CD4-positive, alpha-beta memory T cell (primary cell): ENCODE measurements at regions of chr18 and their contacts with region 1.

Region 1: GRCh38 chr18:40676668-40677067 is 1278.4 kb upstream of the PIK3C3 start:
- DNase-seq: no peak
- H3K4me3 ChIP-seq: no peak overlapping the region
- H3K4me3 Mint-ChIP-seq: no peak overlapping the region
- H3K27ac ChIP-seq: no peak overlapping the region
- H3K27ac Mint-ChIP-seq: no peak overlapping the region
- H3K4me1 ChIP-seq: no peaks in the 10 kb centered on the region
- H3K4me1 Mint-ChIP-seq: no peaks in the 10 kb centered on the region
- H3K27me3 ChIP-seq: no peaks in the 10 kb centered on the region
- H3K27me3 Mint-ChIP-seq: no peaks in the 10 kb centered on the region

Region 2: DNA sequence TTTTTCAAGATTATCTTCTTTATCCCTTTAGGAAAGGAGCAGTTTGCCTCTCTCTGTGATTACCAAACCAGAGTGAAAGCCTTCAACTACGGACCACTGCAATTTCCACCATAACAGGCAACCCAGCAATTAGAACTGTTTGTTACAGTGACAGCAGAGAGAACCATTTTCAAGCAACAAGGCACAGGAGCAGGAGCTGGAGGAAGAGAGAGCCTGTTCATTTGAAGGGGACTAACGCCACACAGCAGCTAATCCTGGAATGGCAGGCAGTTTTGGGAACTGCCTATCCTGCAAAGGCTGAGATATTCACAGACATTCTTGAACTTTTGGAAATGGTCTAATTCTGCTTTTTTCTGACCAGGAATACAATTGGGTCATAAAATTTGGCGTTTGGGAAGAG is 263.5 kb before region 1 on chr18:
- CTCF ChIA-PET with region 1: no interaction called
- POLR2A ChIA-PET with region 1: no interaction called
- intact Hi-C with region 1: no loop called
- DNase-seq: no peak
- H3K4me3 ChIP-seq: no peak overlapping the region
- H3K4me3 Mint-ChIP-seq: no peak overlapping the region
- H3K27ac ChIP-seq: no peak overlapping the region
- H3K27ac Mint-ChIP-seq: no peak overlapping the region
- H3K4me1 ChIP-seq: no peaks in the 10 kb centered on the region
- H3K4me1 Mint-ChIP-seq: no peaks in the 10 kb centered on the region
- H3K27me3 ChIP-seq: no peaks in the 10 kb centered on the region
- H3K27me3 Mint-ChIP-seq: no peaks in the 10 kb centered on the region

Region 3: DNA sequence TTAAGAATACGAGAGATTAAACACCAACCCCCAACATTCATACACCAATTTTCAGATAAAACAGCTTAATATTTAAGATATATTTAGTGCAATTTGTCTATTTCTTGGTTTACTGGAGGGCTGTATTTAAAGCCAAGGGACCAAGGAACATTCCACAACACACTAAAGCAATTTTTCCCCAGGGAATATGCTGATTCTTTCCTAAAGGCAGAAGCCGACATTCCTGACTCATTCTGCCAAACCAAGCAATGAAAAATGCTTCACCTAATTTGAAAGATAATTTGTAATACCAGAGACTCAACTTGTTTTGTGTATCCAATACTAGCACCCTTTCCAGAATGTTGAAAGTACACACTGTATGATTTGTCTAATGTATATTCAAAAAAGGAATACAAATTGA is 10.7 kb after region 1 on chr18:
- CTCF ChIA-PET with region 1: no interaction called
- POLR2A ChIA-PET with region 1: no interaction called
- intact Hi-C with region 1: loop called (anchors 1 kb)
- DNase-seq: no peak
- H3K4me3 ChIP-seq: no peak overlapping the region
- H3K4me3 Mint-ChIP-seq: no peak overlapping the region
- H3K27ac ChIP-seq: no peak overlapping the region
- H3K27ac Mint-ChIP-seq: no peak overlapping the region
- H3K4me1 ChIP-seq: no peaks in the 10 kb centered on the region
- H3K4me1 Mint-ChIP-seq: no peaks in the 10 kb centered on the region
- H3K27me3 ChIP-seq: no peaks in the 10 kb centered on the region
- H3K27me3 Mint-ChIP-seq: no peaks in the 10 kb centered on the region